ENCODE measurements at regions of chr14 and their contacts with region 1.

Region 1: DNA sequence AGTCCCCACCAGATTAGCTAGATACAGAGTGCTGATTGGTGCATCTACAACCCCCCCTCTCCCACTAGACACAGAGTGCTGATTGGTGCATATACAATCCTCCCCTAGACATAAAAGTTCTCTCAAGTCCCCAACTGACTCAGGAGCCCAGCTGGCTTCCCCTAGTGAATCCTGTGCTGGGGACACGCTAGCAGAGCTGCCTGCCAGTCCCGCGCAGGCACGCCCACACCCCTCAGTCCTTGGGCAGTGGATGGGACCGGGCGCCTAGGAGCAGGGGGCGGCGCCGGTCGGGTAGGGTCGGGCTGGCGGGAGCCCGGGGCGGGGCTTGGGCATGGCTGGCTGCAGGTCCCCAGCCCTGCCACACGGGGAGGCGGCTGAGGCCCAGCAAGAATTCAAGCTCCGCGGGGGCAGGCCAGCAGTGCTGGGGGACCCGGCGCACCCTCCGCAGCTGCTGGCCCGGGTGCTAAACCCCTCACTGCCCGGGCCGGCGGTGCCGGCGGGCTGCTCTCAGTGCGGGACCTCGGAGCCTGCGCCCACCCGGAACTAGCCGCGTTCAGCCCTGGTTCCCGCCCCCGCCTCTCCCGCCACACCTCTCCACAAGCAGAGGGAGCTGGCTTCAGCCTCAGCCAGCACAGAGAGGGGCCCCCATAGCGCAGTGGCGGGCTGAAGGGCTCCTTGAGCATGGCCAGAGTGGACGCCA is 64.3 kb upstream of the DDHD1 start:
- DNase-seq: peak; percentile 93
- ATAC-seq: peak; percentile 99
- H3K4me3 Mint-ChIP-seq: peak overlapping the region; percentile 78
- H3K27ac Mint-ChIP-seq: no peak overlapping the region; the same call in 1 of the 2 replicates
- H3K4me1 Mint-ChIP-seq: peaks cover 5% of the 10 kb centered on the region
- H3K27me3 Mint-ChIP-seq: no peaks in the 10 kb centered on the region
- CTCF ChIP-seq: no peak

Region 2: DNA sequence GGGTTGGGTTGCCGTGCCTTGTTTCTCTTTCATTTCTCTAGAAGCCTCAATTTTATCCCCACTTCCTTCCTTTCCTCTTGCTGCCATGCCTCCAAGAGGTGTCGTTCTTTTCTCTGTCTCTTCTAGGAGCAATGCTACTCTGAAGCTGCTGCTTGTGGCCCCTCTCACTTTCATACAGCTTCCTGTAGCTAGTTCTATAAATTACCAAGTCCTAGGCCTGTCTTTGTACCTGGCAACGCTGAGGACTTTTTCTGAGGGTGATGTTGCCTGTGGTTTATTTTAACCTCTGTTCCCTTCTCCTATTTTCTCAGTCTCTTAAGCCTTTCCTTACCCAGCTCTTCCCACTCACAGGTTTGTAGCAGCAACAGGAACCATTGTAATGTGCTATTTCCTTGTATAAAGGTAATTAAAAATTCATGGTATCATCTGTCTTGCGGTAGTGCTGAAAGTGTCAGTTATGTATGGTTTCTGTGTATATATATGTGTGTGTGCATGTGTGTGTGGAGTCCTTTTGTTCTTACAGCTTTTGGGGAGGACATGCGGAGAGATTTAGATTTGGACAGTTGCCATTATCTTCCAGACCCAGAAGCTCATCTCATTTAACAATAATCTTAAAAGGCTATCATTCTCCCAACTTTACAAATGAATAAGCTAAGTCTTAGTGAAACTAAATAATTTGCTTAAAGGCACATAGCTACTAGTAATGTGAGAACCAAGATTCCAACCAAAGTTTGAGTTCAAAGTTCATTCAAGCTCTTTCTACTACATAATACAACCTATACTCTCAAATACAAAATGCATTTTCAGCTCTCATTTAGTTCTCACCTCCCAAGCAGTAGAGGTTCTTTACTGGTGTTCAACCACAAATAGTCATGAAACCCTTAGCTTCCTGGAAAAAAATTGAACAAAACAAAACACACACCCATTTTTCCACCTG is 108.1 kb before region 1 on chr14:
- CTCF ChIA-PET with region 1: no interaction called
- POLR2A ChIA-PET with region 1: no interaction called
- DNase-seq: no peak
- ATAC-seq: no peak
- H3K4me3 Mint-ChIP-seq: no peak overlapping the region
- H3K27ac Mint-ChIP-seq: no peak overlapping the region
- H3K4me1 Mint-ChIP-seq: peaks cover 10% of the 10 kb centered on the region
- H3K27me3 Mint-ChIP-seq: no peaks in the 10 kb centered on the region
- CTCF ChIP-seq: no peak

Region 3: DNA sequence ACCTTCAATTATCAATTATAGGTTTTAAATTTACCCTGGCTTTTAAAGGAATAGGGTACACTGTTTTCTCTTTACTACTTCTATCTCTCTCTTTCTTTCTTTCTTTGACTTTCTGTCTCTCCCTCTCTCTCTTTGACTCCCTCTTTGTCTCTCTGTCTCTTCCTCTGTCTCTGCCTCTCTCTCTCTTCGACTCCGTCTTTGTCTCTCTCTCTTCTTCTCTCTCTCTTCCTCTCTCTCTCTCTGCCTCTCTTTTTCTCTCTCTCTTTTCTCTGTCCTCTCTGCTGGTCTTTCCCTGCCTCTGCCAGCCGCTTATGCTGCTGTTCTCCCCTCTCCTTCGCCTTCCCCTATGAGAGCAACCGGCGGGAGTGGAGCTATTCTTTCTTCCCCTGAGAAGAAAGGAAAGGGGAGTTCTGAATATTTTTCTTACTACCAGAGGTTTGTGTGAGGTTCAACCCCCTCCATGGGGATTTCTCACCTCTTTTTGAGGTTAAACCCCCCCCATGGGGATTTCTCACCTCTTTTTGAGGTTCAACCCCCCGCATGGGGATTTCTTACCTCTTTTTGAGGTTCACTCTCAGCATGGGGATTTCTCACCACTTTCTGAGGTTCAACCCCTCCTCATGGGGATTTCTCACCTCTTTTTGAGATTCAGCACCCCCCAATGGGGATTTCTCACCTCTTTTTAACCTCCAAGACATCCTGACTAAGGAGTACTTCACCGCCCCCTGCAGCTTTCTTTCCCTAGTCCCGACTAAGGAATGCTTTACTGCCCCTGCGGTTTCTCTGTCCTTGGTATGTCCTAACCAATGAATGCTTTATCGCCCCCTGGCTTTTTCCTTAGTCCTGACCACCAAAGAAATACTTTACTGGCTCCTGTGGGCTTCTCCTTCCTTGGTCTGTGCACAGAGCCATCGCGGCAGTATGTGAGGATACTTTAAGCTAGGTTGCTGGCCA is 36.9 kb before region 1 on chr14:
- CTCF ChIA-PET with region 1: interaction called, 21 read pairs
- POLR2A ChIA-PET with region 1: no interaction called
- DNase-seq: peak; percentile 68
- ATAC-seq: peak; percentile 97
- H3K4me3 Mint-ChIP-seq: no peak overlapping the region
- H3K27ac Mint-ChIP-seq: no peak overlapping the region
- H3K4me1 Mint-ChIP-seq: peaks cover 37% of the 10 kb centered on the region
- H3K27me3 Mint-ChIP-seq: no peaks in the 10 kb centered on the region
- CTCF ChIP-seq: 0 out of 2 replicates have a peak, but pooled peaks have one; percentile 40

Region 4: GRCh38 chr14:53285805-53286204 is 68.4 kb after region 1 on chr14:
- CTCF ChIA-PET with region 1: no interaction called
- POLR2A ChIA-PET with region 1: no interaction called
- DNase-seq: no peak
- ATAC-seq: no peak
- H3K4me3 Mint-ChIP-seq: no peak overlapping the region
- H3K27ac Mint-ChIP-seq: no peak overlapping the region
- H3K4me1 Mint-ChIP-seq: no peaks in the 10 kb centered on the region
- H3K27me3 Mint-ChIP-seq: no peaks in the 10 kb centered on the region
- CTCF ChIP-seq: no peak